Dendritic cell treated with granulocyte-macrophage colony-stimulating factor and Interleukin-4, amounts not matched to agents 40 ng/mL and 50 ng/mL, for 4 days (primary cell): ENCODE measurements at regions of chr2 and their contacts with region 1.

Region 1: GRCh38 chr2:201071479-201072200 is at the starts of genes HYCC2 and NDUFB3:
- H3K4me3 Mint-ChIP-seq: peak within 1 kb of the TSS; percentile 94
- H3K27ac Mint-ChIP-seq: peak within 1 kb of the TSS; percentile 93
- H3K4me1 Mint-ChIP-seq: peaks cover 37% of the 10 kb centered on the region
- H3K27me3 Mint-ChIP-seq: no peaks in the 10 kb centered on the region

Region 2: GRCh38 chr2:200901459-200902072 is 170.1 kb before region 1 on chr2:
- intact Hi-C with region 1: loop called (anchors 1 kb)
- H3K4me3 Mint-ChIP-seq: no peak overlapping the region
- H3K27ac Mint-ChIP-seq: no peak overlapping the region
- H3K4me1 Mint-ChIP-seq: peaks cover 9% of the 10 kb centered on the region
- H3K27me3 Mint-ChIP-seq: no peaks in the 10 kb centered on the region

Region 3: DNA sequence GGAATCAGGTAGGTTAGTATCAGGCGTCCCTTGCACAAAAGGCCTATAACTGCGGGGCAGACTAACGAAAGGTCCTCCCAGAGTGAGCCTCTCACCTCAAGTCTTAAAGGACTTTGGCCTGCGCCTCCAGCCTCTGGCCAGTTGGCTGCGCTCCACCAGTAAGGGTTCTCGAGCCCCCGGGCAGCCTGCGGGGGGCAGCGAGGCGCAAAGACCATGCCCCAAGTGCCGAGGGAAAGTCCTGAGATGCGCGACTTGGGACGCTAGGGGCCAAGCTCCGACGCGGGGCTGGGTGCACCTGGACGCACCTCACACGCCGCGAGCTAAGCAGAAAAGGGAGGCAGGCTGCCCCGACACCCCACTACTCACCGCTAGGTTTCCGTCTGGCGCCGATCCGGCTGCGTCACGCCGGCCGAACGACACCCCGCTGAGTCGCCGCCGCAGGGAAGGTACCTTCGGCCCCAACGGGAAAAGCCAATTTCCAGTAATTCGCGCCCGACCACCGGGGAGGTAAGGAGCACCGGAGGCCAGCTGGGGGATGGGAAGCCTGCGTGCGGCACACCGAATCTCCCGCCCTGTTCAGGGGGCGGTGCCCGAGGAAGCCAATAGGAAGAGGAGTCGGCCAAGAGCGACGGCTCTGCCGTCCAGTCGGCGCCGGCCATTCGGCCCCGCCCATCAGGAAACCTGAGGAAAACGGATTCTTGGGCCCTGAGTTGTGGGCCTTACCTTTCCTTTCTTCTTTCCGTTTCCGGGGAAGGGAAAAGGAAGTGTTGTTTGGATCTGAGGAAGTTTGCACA is 108.3 kb before region 1 on chr2 and contains the start of gene ORC2:
- intact Hi-C with region 1: loop called (anchors 1 kb)
- H3K4me3 Mint-ChIP-seq: peak within 1 kb of the TSS; percentile 87
- H3K27ac Mint-ChIP-seq: peak within 1 kb of the TSS; percentile 91
- H3K4me1 Mint-ChIP-seq: peaks cover 33% of the 10 kb centered on the region
- H3K27me3 Mint-ChIP-seq: no peaks in the 10 kb centered on the region

Region 4: GRCh38 chr2:201004370-201004769 is 67.3 kb before region 1 on chr2:
- intact Hi-C with region 1: no loop called
- H3K4me3 Mint-ChIP-seq: no peak overlapping the region
- H3K27ac Mint-ChIP-seq: no peak overlapping the region
- H3K4me1 Mint-ChIP-seq: no peaks in the 10 kb centered on the region
- H3K27me3 Mint-ChIP-seq: no peaks in the 10 kb centered on the region

Region 5: DNA sequence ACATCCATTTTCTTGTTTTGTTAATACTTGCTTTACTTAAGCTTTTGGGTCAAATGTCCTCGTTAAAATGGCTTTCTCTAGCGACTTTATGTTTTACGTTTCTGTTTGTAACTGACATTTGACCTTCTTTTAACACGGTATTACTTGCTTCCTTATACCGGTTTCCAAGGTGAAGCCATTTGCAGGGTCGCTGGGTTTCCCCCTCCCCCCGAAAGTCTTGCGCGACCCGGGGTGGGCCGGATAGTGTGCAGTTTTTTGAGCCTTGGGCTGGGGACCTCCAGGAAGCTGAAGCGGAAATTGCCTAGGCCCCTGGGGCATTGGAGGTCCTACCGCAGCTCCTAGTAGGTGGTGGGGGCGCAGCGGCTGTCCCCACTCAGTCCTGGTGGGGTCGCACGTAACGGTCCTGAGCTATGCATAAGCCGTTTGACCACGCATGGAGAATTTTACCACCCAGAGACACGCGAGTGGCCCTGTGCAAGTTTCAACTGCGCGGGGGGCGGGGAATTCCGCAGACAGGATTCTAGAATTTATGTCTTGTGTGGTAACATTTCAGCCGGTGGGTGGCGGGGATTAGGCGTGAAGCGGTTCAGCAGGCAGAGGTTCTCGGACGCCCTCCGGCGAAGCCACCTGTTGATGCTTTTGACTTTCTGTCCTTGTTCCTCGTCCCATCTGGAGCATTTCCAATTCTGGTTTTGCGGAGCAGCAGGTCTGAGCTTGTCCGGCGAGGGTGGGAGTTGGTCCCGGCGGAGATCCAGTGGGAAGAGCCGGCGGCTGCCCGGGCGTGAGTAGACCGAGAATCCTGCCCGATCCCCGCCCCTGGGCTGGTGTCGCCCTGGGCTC is 46.7 kb after region 1 on chr2:
- intact Hi-C with region 1: loop called (anchors 5 kb)
- H3K4me3 Mint-ChIP-seq: peak overlapping the region; percentile 99
- H3K27ac Mint-ChIP-seq: peak overlapping the region; percentile 98
- H3K4me1 Mint-ChIP-seq: peaks cover 43% of the 10 kb centered on the region
- H3K27me3 Mint-ChIP-seq: no peaks in the 10 kb centered on the region

Region 6: DNA sequence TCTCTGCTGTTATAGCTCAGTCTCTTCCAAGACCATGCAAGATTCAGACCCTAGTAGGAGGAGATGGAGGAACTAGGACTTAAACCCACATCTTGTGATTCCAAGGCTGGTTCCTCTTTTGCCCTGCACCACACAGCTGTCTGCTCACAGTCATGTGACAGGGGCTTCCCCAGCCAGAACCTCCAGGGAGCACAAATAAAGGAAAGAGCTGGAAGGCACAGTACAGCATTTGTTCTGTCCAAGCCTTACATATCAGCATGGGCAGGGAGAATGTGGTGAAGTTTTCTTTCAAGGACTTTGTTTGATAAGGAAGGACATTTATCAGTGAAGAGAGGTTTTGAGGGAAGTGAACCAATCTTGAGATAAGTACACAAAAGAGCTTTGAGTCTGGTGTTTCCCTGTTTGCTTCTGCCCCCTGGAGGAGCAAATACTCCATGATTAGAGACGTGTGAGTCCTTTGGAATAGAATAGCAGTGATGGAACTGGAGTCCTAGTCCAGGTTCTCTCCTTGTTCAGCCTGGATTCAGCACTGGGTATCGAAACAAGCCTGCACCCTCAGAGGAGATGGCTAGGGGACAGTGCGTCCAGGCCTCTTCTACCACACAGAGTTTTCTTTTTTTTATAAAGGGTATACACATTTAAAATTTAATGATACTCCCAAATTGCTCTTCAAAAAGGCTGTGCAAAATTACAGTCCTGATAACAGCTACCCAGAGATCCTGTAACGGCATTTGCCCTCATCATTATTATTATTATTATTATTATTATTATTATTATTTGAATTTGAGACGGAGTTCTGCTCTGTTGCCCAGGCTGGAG is 86.7 kb after region 1 on chr2:
- intact Hi-C with region 1: loop called (anchors 5 kb)
- H3K4me3 Mint-ChIP-seq: peak overlapping the region; percentile 45
- H3K27ac Mint-ChIP-seq: peak overlapping the region; percentile 94
- H3K4me1 Mint-ChIP-seq: peaks cover 60% of the 10 kb centered on the region
- H3K27me3 Mint-ChIP-seq: no peaks in the 10 kb centered on the region

Region 7: GRCh38 chr2:201171259-201171814 is 99.7 kb after region 1 on chr2:
- intact Hi-C with region 1: loop called (anchors 5 kb)
- H3K4me3 Mint-ChIP-seq: no peak overlapping the region
- H3K27ac Mint-ChIP-seq: no peak overlapping the region
- H3K4me1 Mint-ChIP-seq: peaks cover 30% of the 10 kb centered on the region
- H3K27me3 Mint-ChIP-seq: no peaks in the 10 kb centered on the region